Dendritic cell treated with granulocyte-macrophage colony-stimulating factor and Interleukin-4, amounts not matched to agents 40 ng/mL and 50 ng/mL, for 4 days (primary cell): ENCODE measurements at regions of chr19 and their contacts with region 1.

Region 1: DNA sequence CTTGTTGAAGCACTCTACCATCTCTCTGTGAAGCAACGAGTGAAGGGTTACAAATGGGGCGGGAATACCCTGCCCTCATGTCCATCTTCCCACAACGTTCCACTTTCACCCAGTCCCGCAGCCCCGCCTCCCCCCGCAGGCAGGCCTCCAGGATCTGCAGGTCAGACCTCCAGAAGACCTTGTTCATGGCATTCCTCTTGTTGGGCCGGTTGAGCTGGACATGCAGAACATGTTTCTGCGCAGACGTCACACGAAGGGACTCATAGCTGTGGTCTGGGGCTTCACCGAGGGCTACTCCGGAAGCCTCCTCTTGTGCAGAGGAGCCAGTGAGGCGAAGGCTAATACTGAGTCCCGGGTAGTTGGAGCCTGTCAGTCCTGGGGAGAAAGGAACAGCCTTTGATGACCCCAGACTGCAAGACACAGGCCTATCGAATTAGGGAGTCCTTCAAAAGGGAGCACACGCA is 420 bp downstream of the ECH1 start:
- H3K4me3 Mint-ChIP-seq: peak overlapping the region; percentile 93
- H3K27ac Mint-ChIP-seq: peak overlapping the region; percentile 94
- H3K4me1 Mint-ChIP-seq: peaks cover 51% of the 10 kb centered on the region
- H3K27me3 Mint-ChIP-seq: no peaks in the 10 kb centered on the region

Region 2: GRCh38 chr19:38899447-38900219 is 68.5 kb after region 1 on chr19 and contains the starts of genes NFKBIB and SIRT2:
- intact Hi-C with region 1: loop called (anchors 5 kb)
- H3K4me3 Mint-ChIP-seq: peak within 1 kb of the TSS; percentile 90
- H3K27ac Mint-ChIP-seq: peak within 1 kb of the TSS; percentile 89
- H3K4me1 Mint-ChIP-seq: peaks cover 43% of the 10 kb centered on the region
- H3K27me3 Mint-ChIP-seq: no peaks in the 10 kb centered on the region